ENCODE measurements at regions of chr15 and their contacts with region 1.

Region 1: DNA sequence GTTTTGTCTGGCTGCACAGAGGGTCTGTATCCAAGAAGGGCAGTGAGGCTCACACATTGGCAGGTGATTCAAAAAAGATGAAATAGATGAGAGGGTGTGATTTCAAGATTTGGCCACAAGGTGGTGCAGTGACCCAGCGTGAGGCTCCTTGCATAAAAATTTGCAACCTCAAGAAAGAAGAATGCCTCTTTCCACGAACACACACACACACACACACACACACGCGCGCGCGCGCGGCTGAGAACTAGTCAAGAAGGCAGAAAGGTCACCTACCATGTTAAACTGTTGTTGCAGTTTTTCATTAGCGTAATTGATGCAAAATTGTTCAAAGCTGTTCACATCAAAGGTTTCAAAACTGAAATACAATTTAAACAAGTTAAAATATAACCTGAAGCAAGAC is 39.2 kb downstream of the MYO5C start:
- DNase-seq: peak; percentile 89
- ATAC-seq: peak; percentile 78
- H3K4me3 Mint-ChIP-seq: peak overlapping the region; percentile 38
- H3K27ac Mint-ChIP-seq: peak overlapping the region; percentile 55
- H3K4me1 Mint-ChIP-seq: peaks cover 24% of the 10 kb centered on the region
- H3K27me3 Mint-ChIP-seq: no peaks in the 10 kb centered on the region
- CTCF ChIP-seq: peak; percentile 74

Region 2: GRCh38 chr15:52280326-52281084 is 24.1 kb after region 1 on chr15:
- CTCF ChIA-PET with region 1: interaction called, 20 read pairs
- POLR2A ChIA-PET with region 1: no interaction called
- intact Hi-C with region 1: no loop called
- DNase-seq: no peak
- ATAC-seq: no peak
- H3K4me3 Mint-ChIP-seq: no peak overlapping the region
- H3K27ac Mint-ChIP-seq: no peak overlapping the region
- H3K4me1 Mint-ChIP-seq: no peaks in the 10 kb centered on the region
- H3K27me3 Mint-ChIP-seq: peaks cover 5% of the 10 kb centered on the region
- CTCF ChIP-seq: no peak

Region 3: GRCh38 chr15:52331490-52332240 is 75.3 kb after region 1 on chr15:
- CTCF ChIA-PET with region 1: interaction called, 22 read pairs
- POLR2A ChIA-PET with region 1: interaction called, 3 read pairs
- intact Hi-C with region 1: loop called (anchors 10 kb)
- DNase-seq: peak; percentile 75
- ATAC-seq: peak; percentile 99
- H3K4me3 Mint-ChIP-seq: no peak overlapping the region
- H3K27ac Mint-ChIP-seq: peak overlapping the region; percentile 74
- H3K4me1 Mint-ChIP-seq: peaks cover 20% of the 10 kb centered on the region
- H3K27me3 Mint-ChIP-seq: no peaks in the 10 kb centered on the region
- CTCF ChIP-seq: peak; percentile 71

Region 4: DNA sequence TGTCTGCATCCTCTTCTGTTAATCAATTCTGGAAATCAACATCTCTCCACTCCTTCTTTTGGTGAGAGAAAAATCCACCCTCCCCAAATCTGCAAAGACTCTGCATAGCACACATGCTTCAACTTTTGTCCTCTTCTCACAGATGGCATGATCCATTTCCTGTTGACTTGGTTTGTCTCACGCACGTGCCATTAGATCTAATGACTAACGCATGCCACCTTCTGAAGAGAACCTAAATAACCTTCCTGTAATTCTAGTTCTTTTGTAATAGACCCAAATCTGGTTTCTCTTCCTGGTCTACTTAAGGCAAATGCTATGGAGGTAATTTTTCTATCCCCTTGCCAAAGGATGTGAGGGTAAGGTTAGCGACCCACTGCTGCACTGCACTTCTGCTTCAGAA is 473.8 kb after region 1 on chr15:
- CTCF ChIA-PET with region 1: interaction called, 49 read pairs
- POLR2A ChIA-PET with region 1: no interaction called
- intact Hi-C with region 1: loop called (anchors 2 kb)
- DNase-seq: peak; percentile 52
- ATAC-seq: peak; percentile 58
- H3K4me3 Mint-ChIP-seq: no peak overlapping the region
- H3K27ac Mint-ChIP-seq: peak overlapping the region; percentile 72
- H3K4me1 Mint-ChIP-seq: peaks cover 11% of the 10 kb centered on the region
- H3K27me3 Mint-ChIP-seq: no peaks in the 10 kb centered on the region
- CTCF ChIP-seq: no peak

Measured in activated CD8-positive, alpha-beta T cell treated with anti-CD3 and anti-CD28 coated beads for 36 hours (primary cell).